CD4-positive, alpha-beta T cell (primary cell): ENCODE measurements at regions of chr15 and their contacts with region 1.

Region 1: DNA sequence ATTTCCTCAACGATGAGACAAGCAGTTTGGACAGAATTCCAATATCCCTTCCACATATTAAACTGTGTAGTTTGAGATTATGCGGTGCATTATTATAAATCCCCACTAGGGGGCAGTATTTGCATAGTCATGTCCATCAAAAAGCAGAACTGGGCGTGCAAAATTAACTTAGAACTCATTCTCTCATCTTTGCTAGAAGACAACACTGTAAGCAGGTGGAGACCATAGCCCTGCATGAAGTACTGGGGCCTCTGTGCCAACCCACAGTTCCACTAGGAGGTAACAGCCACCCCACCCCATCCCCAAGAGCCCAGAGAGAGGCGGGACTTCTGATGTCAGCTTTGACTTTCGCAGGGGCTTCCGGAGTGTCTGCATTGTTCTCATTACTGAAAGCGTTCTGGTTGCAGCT is 106.6 kb upstream of the TMC3 start:
- DNase-seq: peak in 6 of 14 experiments; percentile 4 to 68 (median 38)
- ATAC-seq: peak; percentile 44
- H3K4me3 ChIP-seq: no peak overlapping the region
- H3K4me3 Mint-ChIP-seq: no peak overlapping the region
- H3K27ac ChIP-seq: no peak overlapping the region
- H3K27ac Mint-ChIP-seq: no peak overlapping the region
- H3K4me1 ChIP-seq: no peaks in the 10 kb centered on the region
- H3K4me1 Mint-ChIP-seq: no peaks in the 10 kb centered on the region
- H3K27me3 ChIP-seq: no peaks in the 10 kb centered on the region
- H3K27me3 Mint-ChIP-seq: peaks cover 8% of the 10 kb centered on the region
- CTCF ChIP-seq: peak; percentile 95

Region 2: GRCh38 chr15:82046666-82047452 is 566.2 kb after region 1 on chr15:
- CTCF ChIA-PET with region 1: interaction called, 5 read pairs
- POLR2A ChIA-PET with region 1: no interaction called
- intact Hi-C with region 1: loop called (anchors 1 to 2 kb)
- DNase-seq: peak; percentile 70 to 96 (median 86)
- ATAC-seq: peak; percentile 78
- H3K4me3 ChIP-seq: peak overlapping the region; percentile 84
- H3K4me3 Mint-ChIP-seq: peak overlapping the region; percentile 95
- H3K27ac ChIP-seq: peak overlapping the region; percentile 67 to 73
- H3K27ac Mint-ChIP-seq: peak overlapping the region; percentile 90
- H3K4me1 ChIP-seq: peaks cover 28% of the 10 kb centered on the region
- H3K4me1 Mint-ChIP-seq: peaks cover 12% of the 10 kb centered on the region
- H3K27me3 ChIP-seq: peaks cover 2 to 4% of the 10 kb centered on the region in 2 experiments
- H3K27me3 Mint-ChIP-seq: peaks cover 9% of the 10 kb centered on the region
- CTCF ChIP-seq: peak; percentile 62

Region 3: DNA sequence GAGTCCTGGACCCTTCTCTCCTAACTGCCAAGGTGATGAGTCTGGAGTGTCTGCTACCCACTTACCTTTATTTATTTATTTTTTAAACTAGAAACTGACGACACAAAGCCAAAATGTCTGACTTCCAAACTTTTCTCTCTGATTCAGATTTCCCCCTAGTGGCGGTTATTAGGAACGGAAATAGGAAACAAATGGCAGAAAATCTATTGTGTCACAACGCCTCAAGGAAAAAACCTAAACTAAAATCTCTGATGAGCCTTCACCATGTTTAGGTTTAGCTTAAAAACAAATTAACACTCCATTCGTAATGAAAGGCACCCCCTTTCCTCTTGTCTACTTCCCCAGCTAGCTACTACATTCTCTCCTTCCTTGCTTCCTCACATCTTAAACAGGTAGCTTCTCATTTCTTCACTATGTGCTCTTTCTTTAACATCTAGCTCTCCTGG is 659.2 kb after region 1 on chr15:
- CTCF ChIA-PET with region 1: no interaction called
- POLR2A ChIA-PET with region 1: no interaction called
- intact Hi-C with region 1: loop called (anchors 2 kb)
- DNase-seq: peak in 3 of 14 experiments; percentile 22 to 52 (median 47)
- ATAC-seq: peak; percentile 49
- H3K4me3 ChIP-seq: no peak overlapping the region
- H3K4me3 Mint-ChIP-seq: no peak overlapping the region
- H3K27ac ChIP-seq: no peak overlapping the region
- H3K27ac Mint-ChIP-seq: peak overlapping the region; percentile 2
- H3K4me1 ChIP-seq: no peaks in the 10 kb centered on the region
- H3K4me1 Mint-ChIP-seq: peaks cover 9% of the 10 kb centered on the region
- H3K27me3 ChIP-seq: no peaks in the 10 kb centered on the region
- H3K27me3 Mint-ChIP-seq: no peaks in the 10 kb centered on the region
- CTCF ChIP-seq: peak; percentile 74

Region 4: DNA sequence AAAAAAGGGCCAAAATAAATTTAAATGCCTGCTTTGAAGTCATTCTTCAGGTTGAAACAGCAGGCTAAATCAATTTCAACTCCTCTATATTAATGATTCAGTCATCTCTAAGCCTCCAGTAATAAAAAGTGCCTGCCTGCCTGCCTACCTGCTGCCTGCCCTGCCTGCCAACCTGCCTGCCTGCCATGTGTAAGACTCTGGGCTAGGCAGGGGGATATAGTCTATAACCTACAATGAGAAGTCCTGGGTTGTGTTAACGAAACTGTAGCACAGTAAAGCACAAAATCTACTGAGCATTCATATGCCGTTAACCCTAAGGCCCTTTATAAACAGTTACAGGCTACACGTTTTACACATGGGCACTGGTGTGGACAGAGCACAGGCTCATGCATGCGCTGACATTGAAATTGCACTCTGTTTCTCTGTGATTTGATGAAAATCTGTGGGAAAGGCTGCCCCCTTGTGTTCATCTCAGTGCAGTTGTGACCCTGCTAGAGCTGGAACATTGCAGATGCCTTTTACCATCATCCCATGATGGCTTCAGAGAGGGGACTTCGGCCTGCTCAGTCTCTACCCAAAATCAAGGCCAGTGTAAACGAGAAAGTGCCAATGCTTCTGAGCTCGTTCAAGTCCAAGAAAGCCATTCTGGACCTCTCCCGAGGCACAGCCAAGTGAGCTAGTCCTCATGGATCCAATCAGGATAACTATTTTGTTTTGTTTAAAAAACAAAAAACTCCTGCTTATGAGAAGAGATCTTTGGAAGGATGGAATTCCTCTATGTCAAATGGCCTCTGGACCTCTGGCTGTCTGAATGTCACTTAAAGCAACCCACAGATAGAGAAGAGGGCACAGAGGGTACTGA is 717.3 kb after region 1 on chr15:
- CTCF ChIA-PET with region 1: no interaction called
- POLR2A ChIA-PET with region 1: no interaction called
- intact Hi-C with region 1: loop called (anchors 1 to 2 kb)
- DNase-seq: peak; percentile 17 to 72 (median 41)
- ATAC-seq: peak; percentile 68
- H3K4me3 ChIP-seq: no peak overlapping the region
- H3K4me3 Mint-ChIP-seq: no peak overlapping the region
- H3K27ac ChIP-seq: no peak overlapping the region
- H3K27ac Mint-ChIP-seq: no peak overlapping the region
- H3K4me1 ChIP-seq: no peaks in the 10 kb centered on the region
- H3K4me1 Mint-ChIP-seq: no peaks in the 10 kb centered on the region
- H3K27me3 ChIP-seq: no peaks in the 10 kb centered on the region
- H3K27me3 Mint-ChIP-seq: no peaks in the 10 kb centered on the region
- CTCF ChIP-seq: peak; percentile 63